Naive thymus-derived CD4-positive, alpha-beta T cell (primary cell): ENCODE measurements at regions of chr16 and their contacts with region 1.

Region 1: DNA sequence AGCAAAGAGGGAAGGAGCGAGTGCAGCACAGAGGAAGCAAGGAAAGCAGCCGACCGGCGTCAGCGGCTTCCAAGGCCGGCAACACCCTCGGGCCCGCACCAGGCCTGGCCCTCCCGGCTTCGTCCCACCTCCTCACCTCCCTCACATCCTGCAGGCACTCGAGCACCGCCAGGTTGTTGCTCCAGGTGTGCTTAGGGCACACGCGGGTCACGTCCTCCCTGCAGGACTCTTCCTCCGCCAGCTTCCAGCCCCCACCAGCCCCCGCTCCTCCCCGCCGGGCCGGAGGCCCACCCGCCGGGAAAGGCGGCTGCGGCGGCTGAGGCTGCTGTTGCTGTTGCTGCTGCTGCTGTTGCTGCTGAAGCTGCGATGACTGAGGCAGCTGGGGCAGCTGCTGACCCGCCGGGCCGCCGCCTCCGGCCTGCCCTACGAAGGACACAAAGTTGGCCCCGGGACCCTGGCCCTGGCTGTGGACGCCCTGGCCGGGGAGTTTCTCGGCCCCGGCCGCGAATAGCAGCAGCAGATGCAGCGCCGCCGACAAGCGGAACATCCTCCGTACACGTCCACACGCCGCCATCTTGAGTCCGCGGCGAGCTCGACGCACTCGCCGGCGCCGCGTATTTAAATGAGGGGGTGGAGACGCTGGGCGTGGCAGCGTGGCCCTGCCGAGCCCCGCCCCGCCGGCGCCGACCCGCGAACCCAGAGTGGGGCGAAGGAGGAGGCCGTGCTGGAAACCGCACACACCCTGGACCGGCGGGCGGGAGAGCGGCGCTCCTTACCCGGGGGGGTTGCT is at the start of gene GLG1:
- DNase-seq: peak; percentile 86 to 94 (median 92)
- ATAC-seq: peak; percentile 97
- H3K4me3 ChIP-seq: peak within 1 kb of the TSS; percentile 78
- H3K4me3 Mint-ChIP-seq: peak within 1 kb of the TSS; percentile 92 to 100 (median 98)
- H3K27ac ChIP-seq: peak within 1 kb of the TSS; percentile 91
- H3K27ac Mint-ChIP-seq: peak within 1 kb of the TSS; percentile 86 to 99 (median 96)
- H3K4me1 ChIP-seq: peaks cover 36 to 46% of the 10 kb centered on the region in 2 donors
- H3K4me1 Mint-ChIP-seq: peaks cover 48 to 74% (median 62%) of the 10 kb centered on the region in 7 donors
- H3K27me3 ChIP-seq: no peaks in the 10 kb centered on the region
- H3K27me3 Mint-ChIP-seq: no peaks in the 10 kb centered on the region
- total RNA-seq, gene GLG1: 125 to 198 (median 188) TPM

Region 2: DNA sequence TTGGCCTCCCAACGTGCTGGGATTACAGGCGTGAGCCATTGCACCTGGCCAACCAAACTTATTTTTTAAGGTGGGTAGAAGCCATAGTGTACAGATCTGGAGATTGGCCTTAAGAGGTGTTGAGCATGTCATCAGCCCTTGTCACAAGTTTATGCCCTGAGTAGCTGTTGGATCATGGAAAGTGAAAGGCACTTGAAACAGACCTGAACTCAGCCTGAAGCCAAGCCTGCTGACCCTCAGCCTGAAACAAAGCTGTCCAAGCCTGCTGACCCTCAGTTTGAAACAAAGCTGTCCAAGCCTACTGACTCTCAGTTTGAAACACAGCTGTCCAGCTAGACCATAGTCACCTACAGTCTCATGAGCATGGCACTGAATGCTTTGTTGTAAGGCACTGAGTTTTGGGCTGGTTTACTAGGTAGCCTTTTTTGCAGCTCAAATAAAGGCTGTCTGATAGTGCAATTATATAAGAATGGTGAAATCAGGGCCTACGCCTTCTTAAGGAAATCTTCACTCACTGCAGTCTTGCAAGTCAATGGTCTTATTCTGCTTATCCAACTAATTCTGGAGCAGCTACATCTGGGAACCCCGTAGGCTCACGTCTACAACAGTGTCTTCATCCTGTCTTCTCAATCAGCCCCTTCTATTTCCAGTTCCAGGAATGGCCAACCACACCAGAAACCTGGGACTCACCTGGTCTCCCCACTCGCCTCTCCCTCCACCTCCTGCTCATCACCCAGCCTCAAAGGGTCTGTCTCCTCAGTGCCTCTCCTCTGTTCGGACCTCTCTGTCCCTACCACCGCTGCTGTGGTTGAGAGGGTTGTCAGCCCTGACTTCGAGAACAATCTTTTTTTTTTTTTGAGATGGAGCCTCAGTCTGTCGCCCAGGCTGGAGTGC is 233.5 kb before region 1 on chr16:
- CTCF ChIA-PET with region 1: no interaction called
- POLR2A ChIA-PET with region 1: no interaction called
- intact Hi-C with region 1: loop called in 1 of 2 experiments (anchors 5 kb)
- DNase-seq: no peak
- ATAC-seq: no peak
- H3K4me3 ChIP-seq: no peak overlapping the region
- H3K4me3 Mint-ChIP-seq: no peak overlapping the region
- H3K27ac ChIP-seq: no peak overlapping the region
- H3K27ac Mint-ChIP-seq: peak overlapping the region in 2 of 9 donors; percentile 18 to 86
- H3K4me1 ChIP-seq: no peaks in the 10 kb centered on the region
- H3K4me1 Mint-ChIP-seq: peaks cover 0 to 4% (median 0%) of the 10 kb centered on the region in 7 donors
- H3K27me3 ChIP-seq: no peaks in the 10 kb centered on the region
- H3K27me3 Mint-ChIP-seq: no peaks in the 10 kb centered on the region

Region 3: GRCh38 chr16:74501484-74502479 is 104.9 kb before region 1 on chr16:
- CTCF ChIA-PET with region 1: no interaction called
- POLR2A ChIA-PET with region 1: no interaction called
- intact Hi-C with region 1: loop called in 1 of 2 experiments (anchors 5 kb)
- DNase-seq: no peak
- ATAC-seq: no peak
- H3K4me3 ChIP-seq: no peak overlapping the region
- H3K4me3 Mint-ChIP-seq: no peak overlapping the region
- H3K27ac ChIP-seq: no peak overlapping the region
- H3K27ac Mint-ChIP-seq: peak overlapping the region in 8 of 9 donors; percentile 23 to 65 (median 59)
- H3K4me1 ChIP-seq: no peaks in the 10 kb centered on the region
- H3K4me1 Mint-ChIP-seq: peaks cover 0 to 37% (median 29%) of the 10 kb centered on the region in 7 donors
- H3K27me3 ChIP-seq: no peaks in the 10 kb centered on the region
- H3K27me3 Mint-ChIP-seq: no peaks in the 10 kb centered on the region

Region 4: DNA sequence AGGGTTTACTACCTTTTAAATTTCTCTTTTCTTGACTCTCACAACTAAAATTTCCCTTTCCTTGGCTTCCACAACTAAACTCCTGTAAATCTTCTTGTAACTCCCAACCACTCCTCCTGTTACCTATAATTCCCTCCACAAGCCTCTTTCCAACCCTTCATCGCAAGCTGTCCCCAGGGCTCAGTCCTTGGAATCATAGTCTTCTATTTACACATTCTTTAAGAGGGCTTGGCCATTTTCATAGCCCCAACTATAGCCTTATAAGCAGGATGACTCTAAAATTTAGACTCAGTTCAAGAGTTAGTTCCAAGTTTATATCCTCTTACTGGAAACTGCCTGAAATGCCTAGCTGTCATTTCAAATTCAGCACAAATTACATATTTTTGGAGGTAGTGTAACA is 23.7 kb before region 1 on chr16:
- CTCF ChIA-PET with region 1: interaction called, 3 read pairs
- POLR2A ChIA-PET with region 1: interaction called, 13 read pairs
- intact Hi-C with region 1: loop called (anchors 1 to 2 kb)
- DNase-seq: no peak
- ATAC-seq: no peak
- H3K4me3 ChIP-seq: no peak overlapping the region
- H3K4me3 Mint-ChIP-seq: peak overlapping the region in 5 of 10 donors; percentile 12 to 67 (median 57)
- H3K27ac ChIP-seq: no peak overlapping the region
- H3K27ac Mint-ChIP-seq: peak overlapping the region in 8 of 9 donors; percentile 1 to 92 (median 60)
- H3K4me1 ChIP-seq: peaks cover 13 to 21% of the 10 kb centered on the region in 2 donors
- H3K4me1 Mint-ChIP-seq: peaks cover 56 to 99% (median 71%) of the 10 kb centered on the region in 7 donors
- H3K27me3 ChIP-seq: no peaks in the 10 kb centered on the region
- H3K27me3 Mint-ChIP-seq: no peaks in the 10 kb centered on the region

Region 5: GRCh38 chr16:74666425-74667254 is 59.9 kb after region 1 on chr16 and contains the start of gene RFWD3:
- CTCF ChIA-PET with region 1: no interaction called
- POLR2A ChIA-PET with region 1: interaction called, 9 read pairs
- intact Hi-C with region 1: loop called (anchors 1 to 2 kb)
- DNase-seq: peak; percentile 80 to 99 (median 97)
- ATAC-seq: peak; percentile 100
- H3K4me3 ChIP-seq: peak within 1 kb of the TSS; percentile 89
- H3K4me3 Mint-ChIP-seq: peak within 1 kb of the TSS; percentile 87 to 98 (median 95)
- H3K27ac ChIP-seq: peak within 1 kb of the TSS; percentile 86
- H3K27ac Mint-ChIP-seq: peak within 1 kb of the TSS; percentile 92 to 97 (median 95)
- H3K4me1 ChIP-seq: peaks cover 0 to 10% of the 10 kb centered on the region in 2 donors
- H3K4me1 Mint-ChIP-seq: peaks cover 26 to 48% (median 44%) of the 10 kb centered on the region in 7 donors
- H3K27me3 ChIP-seq: no peaks in the 10 kb centered on the region
- H3K27me3 Mint-ChIP-seq: peaks cover 0 to 2% (median 0%) of the 10 kb centered on the region in 5 donors
- total RNA-seq, gene RFWD3: 39.3 to 88.0 (median 56.9) TPM

Region 6: DNA sequence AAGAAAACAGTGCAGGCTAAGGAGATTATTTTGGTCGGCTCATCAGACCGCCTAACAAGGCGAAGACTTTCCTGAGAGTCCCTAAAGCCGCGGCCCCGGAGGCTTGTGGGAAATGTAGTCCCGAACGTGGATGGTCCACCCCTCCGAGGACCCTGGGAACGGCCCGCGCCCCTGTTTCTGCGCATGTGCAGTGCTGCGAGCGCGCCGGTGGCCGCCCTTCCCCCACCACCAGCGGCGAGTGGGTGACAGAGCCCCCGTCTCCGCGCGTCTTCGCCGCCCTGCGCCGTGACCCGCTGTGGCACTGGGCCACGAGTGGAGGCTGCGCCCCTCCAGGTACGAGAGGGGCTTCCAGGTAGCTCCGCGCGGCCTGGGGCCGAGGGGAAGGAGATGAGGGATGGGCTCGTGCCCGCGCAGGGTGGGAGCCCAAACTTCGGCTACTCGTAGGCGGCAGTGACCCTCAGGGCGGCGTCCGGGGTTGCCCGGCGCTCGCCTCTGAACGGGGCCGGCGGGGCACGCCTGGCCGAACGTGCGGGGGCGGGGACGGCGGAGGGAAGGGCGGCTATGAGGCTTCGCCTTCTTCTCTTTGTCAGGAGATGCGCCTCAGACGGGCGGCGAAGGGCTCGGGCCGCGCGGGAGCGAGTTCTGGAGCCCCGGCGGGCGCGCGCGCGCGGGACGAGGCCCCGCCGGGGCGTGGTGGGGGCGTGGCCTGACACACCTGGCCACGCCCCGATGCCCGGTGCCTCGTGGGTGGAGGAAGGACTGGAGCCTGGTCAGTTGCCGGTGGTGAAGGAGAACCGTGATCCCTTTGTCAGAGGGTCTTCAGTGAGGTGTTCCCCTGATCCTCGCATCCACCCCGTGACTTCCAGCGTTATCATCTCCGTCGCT is 541.8 kb after region 1 on chr16 and contains the start of gene ZFP1:
- CTCF ChIA-PET with region 1: no interaction called
- POLR2A ChIA-PET with region 1: no interaction called
- intact Hi-C with region 1: loop called (anchors 1 to 2 kb)
- DNase-seq: peak; percentile 91 to 98 (median 95)
- ATAC-seq: peak; percentile 93
- H3K4me3 ChIP-seq: peak within 1 kb of the TSS; percentile 98
- H3K4me3 Mint-ChIP-seq: peak within 1 kb of the TSS; percentile 85 to 92 (median 89)
- H3K27ac ChIP-seq: peak within 1 kb of the TSS; percentile 89
- H3K27ac Mint-ChIP-seq: peak within 1 kb of the TSS; percentile 66 to 90 (median 86)
- H3K4me1 ChIP-seq: peaks cover 0 to 6% of the 10 kb centered on the region in 2 donors
- H3K4me1 Mint-ChIP-seq: peaks cover 13 to 31% (median 27%) of the 10 kb centered on the region in 7 donors
- H3K27me3 ChIP-seq: no peaks in the 10 kb centered on the region
- H3K27me3 Mint-ChIP-seq: no peaks in the 10 kb centered on the region
- total RNA-seq, gene ZFP1: 8.6 to 13.4 (median 10.1) TPM

Region 7: DNA sequence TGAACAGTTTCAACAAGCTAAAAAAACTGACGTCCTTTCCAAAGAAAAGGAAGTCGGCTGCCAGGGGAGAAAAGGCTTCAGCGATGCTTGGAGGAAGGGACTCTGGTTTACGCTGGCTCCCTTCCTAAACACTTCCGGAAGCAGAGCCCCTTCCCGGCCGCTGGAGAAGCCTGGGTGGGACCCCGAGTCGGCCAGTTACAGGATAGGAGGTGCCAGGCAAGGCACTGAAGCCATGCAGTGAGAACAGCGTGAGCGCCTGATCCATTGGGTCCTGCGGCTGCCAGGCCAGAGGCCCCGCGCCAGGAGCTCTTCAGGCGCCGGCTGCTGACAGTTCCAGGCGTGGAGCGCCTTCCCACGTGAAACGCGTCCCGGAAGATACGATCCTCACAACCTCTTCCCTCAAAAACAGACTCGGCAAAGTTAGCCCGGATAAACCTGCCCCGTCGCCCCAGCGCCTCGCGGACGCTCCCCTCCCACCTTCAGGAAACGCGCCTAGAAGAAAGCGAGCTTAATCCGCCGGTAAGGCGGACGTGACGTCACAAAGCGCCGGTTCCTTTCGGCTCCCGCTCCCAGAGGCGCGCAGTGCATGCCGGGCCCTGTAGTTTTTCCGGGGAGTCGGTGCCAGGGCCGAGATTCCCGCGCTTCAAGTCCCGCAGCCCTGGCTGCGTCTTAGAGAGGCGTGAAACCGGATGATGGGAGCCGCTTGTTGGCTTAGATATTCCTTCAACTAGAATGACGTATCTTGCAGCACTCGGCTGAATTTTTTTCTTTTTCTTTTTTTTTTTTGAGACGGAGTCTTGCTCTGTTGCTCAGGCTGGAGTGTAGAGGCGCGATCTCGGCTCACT is 1016.3 kb after region 1 on chr16 and contains the start of gene ADAT1:
- CTCF ChIA-PET with region 1: no interaction called
- POLR2A ChIA-PET with region 1: no interaction called
- intact Hi-C with region 1: loop called in 1 of 2 experiments (anchors 1 kb)
- DNase-seq: peak; percentile 91 to 99 (median 97)
- ATAC-seq: peak; percentile 97
- H3K4me3 ChIP-seq: peak within 1 kb of the TSS; percentile 80
- H3K4me3 Mint-ChIP-seq: peak within 1 kb of the TSS; percentile 91 to 99 (median 96)
- H3K27ac ChIP-seq: peak within 1 kb of the TSS; percentile 93
- H3K27ac Mint-ChIP-seq: peak within 1 kb of the TSS; percentile 92 to 99 (median 97)
- H3K4me1 ChIP-seq: peaks cover 30 to 49% of the 10 kb centered on the region in 2 donors
- H3K4me1 Mint-ChIP-seq: peaks cover 29 to 76% (median 52%) of the 10 kb centered on the region in 7 donors
- H3K27me3 ChIP-seq: no peaks in the 10 kb centered on the region
- H3K27me3 Mint-ChIP-seq: no peaks in the 10 kb centered on the region
- total RNA-seq, gene ADAT1: 41.3 to 69.4 (median 63.6) TPM